ENCODE measurements at regions of chr5 and their contacts with region 1.

Region 1: DNA sequence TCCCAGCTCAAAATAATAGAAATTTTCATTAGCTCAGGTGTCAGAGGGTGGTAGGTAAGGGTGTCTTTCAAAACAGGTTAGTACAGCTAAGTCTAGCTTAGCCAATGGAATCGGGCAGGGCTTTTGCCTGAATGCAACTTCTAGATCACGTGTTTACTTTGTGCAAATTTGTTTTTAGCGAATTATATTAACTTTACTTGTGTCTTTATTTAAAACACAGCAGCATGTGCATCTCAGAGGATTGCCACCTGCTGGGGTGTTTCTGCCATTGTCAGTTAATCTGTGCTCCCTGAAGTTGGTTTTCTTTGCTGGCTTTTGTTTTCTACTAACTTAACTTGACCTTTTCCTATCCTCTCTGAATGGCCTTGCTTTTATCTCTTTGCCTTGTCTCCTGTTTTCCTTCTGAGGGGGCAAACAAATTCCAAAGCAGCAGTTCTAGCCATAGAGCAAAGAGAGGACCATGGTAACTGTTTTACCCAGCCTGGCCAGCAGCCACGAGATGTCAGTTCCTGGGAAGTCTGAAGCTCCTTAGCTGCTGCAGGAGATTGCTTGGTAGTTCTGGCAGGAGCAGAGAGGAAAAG is 67.6 kb downstream of the ARHGEF28 start:
- DNase-seq: peak; percentile 47
- ATAC-seq: no peak
- H3K4me3 ChIP-seq: no peak overlapping the region
- H3K27ac ChIP-seq: no peak overlapping the region
- H3K4me1 ChIP-seq: peaks cover 35% of the 10 kb centered on the region
- H3K27me3 ChIP-seq: no peaks in the 10 kb centered on the region
- CTCF ChIP-seq: peak; percentile 58

Region 2: GRCh38 chr5:73591102-73591695 is 102.4 kb before region 1 on chr5:
- CTCF ChIA-PET with region 1: interaction called, 5 read pairs
- POLR2A ChIA-PET with region 1: interaction called, 4 read pairs
- intact Hi-C with region 1: loop called (anchors 1 kb)
- DNase-seq: peak; percentile 87
- ATAC-seq: peak; percentile 65
- H3K4me3 ChIP-seq: no peak overlapping the region
- H3K27ac ChIP-seq: no peak overlapping the region
- H3K4me1 ChIP-seq: peaks cover 24% of the 10 kb centered on the region
- H3K27me3 ChIP-seq: no peaks in the 10 kb centered on the region
- CTCF ChIP-seq: peak; percentile 84

Region 3: DNA sequence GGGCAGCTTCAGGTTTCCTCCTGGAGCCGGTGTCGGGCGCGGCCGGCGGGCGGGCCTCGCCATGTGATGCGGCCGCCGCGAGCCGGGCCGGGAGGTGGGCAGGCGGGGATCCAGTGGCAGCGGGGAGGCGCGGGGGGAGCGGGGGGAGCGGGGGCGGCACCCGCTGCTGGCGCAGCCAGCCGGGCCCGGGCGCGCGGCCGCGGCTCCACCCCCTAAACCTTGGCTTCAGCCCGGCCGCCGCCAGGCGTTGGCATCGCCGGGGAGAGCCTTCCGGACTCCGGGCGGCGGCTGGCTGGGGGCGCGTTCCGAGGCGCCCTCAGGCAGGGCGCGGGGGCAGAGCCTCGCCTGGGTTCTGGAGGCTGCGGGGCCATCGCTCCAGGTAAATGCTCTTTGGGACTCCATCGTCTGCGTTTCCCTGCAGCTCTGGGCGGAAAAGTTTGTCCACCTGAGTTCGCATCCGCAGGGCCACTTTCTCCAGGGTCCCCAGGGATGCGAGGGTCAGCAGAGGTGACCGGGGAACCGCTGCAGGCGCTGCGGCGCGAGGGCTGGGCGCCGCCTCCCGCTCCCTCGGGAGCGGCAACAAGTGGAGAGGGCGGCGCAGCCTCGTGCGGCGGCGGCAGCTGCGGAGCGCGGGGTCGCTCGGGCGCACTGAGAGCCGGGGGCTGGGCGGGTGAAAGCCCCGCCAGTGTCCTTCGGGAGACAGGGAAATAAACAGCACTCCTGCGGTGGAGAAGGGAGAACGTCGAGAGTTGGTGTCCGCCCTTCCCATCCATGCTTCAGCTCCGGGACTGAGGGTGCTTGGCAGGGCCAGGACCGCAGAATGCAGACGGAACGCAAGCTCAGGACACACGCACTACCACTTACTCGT is 67.4 kb before region 1 on chr5 and contains the start of gene ARHGEF28:
- CTCF ChIA-PET with region 1: interaction called, 4 read pairs
- POLR2A ChIA-PET with region 1: no interaction called
- intact Hi-C with region 1: loop called (anchors 10 kb)
- DNase-seq: peak; percentile 80
- ATAC-seq: peak; percentile 84
- H3K4me3 ChIP-seq: peak within 1 kb of the TSS; percentile 96
- H3K27ac ChIP-seq: peak within 1 kb of the TSS; percentile 66
- H3K4me1 ChIP-seq: peaks cover 30% of the 10 kb centered on the region
- H3K27me3 ChIP-seq: no peaks in the 10 kb centered on the region
- CTCF ChIP-seq: no peak
- total RNA-seq, gene ARHGEF28: 24.2 and 25.7 TPM in 2 replicates

Region 4: DNA sequence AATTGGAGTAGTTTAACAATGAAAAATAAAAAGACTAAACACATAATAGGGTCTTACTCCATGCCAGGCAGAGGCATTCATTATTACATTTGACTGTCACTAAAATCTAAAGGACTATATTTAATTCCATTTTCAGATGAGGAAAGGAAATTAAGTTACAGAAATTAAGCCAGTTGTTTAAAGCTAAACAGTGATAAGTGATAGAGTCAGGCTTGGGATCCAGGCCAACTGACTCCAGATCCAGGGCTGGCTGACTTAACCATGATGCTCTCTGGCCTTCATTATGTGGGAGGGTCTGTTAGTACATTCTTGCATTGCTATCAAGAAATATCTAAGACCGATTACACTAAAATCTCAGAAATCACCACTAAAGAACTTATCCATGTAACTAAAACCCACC is 39.6 kb after region 1 on chr5:
- CTCF ChIA-PET with region 1: no interaction called
- POLR2A ChIA-PET with region 1: no interaction called
- intact Hi-C with region 1: no loop called
- DNase-seq: no peak
- ATAC-seq: no peak
- H3K4me3 ChIP-seq: no peak overlapping the region
- H3K27ac ChIP-seq: no peak overlapping the region
- H3K4me1 ChIP-seq: peaks cover 12% of the 10 kb centered on the region; the same call in 1 of the 2 replicates
- H3K27me3 ChIP-seq: no peaks in the 10 kb centered on the region
- CTCF ChIP-seq: no peak

Region 5: DNA sequence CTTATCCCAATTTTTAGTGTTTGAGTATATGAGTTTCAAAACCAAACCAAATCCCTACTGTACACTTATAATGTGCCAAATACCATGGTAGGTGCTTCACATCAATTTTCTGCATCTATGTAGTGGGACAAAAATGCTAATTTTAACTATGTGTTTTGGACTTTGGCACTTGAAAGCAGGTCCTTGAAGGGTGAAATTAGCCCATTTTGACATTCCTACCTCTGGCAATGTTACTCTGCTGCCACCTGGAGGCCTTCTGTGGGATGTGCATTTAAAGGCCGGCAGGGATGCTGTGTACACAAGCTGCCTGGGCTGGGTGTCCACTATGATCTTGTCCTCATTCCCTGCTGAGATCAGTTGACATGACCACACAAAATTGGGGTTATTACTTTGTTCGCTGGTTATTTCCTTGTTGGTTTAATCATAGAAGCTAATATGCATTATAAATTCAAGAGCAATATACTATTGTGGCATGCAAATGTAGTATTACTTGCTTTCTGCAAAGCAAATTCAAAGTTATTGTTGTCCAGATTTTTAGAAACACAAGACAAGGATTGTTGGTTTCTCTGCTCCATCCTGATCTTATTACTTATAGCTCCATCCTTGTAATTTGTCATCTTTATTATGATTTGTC is 99.2 kb after region 1 on chr5:
- CTCF ChIA-PET with region 1: no interaction called
- POLR2A ChIA-PET with region 1: no interaction called
- intact Hi-C with region 1: loop called (anchors 5 kb)
- DNase-seq: peak; percentile 83
- ATAC-seq: peak; percentile 57
- H3K4me3 ChIP-seq: no peak overlapping the region
- H3K27ac ChIP-seq: no peak overlapping the region
- H3K4me1 ChIP-seq: peaks cover 46% of the 10 kb centered on the region
- H3K27me3 ChIP-seq: no peaks in the 10 kb centered on the region
- CTCF ChIP-seq: peak; percentile 85